MCF 10A (cell line): ENCODE measurements at regions of chr3 and their contacts with region 1.

Region 1: DNA sequence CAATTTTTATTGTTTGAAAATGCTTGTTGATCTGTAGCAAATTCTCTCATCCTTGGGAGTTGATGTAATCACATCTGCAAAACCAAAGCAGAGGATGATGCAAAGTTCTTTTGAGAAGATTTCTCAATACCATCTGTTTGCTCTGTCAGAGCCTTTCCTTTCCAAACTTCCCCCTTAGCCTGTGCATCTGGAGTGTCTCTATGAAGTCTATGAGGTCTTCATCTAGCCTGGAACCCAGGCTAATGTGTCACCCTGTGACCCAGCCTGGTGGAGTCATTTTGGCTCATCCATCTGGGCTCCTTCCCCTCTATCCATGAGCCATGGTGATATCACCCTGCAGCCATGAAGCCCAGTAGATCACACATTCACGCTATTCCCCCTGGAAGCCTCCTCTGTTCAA is 123.2 kb upstream of the SLC7A14 start:
- DNase-seq: peak; percentile 60
- H3K4me3 Mint-ChIP-seq: no peak overlapping the region
- H3K27ac Mint-ChIP-seq: peak overlapping the region; percentile 33
- H3K4me1 Mint-ChIP-seq: peaks cover 19% of the 10 kb centered on the region
- H3K27me3 Mint-ChIP-seq: no peaks in the 10 kb centered on the region
- CTCF ChIP-seq: no peak

Region 2: GRCh38 chr3:170523248-170523647 is 185.8 kb before region 1 on chr3:
- CTCF ChIA-PET with region 1: no interaction called
- POLR2A ChIA-PET with region 1: no interaction called
- intact Hi-C with region 1: no loop called
- DNase-seq: peak; percentile 16
- H3K4me3 Mint-ChIP-seq: no peak overlapping the region
- H3K27ac Mint-ChIP-seq: peak overlapping the region; percentile 3
- H3K4me1 Mint-ChIP-seq: peaks cover 8% of the 10 kb centered on the region
- H3K27me3 Mint-ChIP-seq: no peaks in the 10 kb centered on the region
- CTCF ChIP-seq: no peak

Region 3: DNA sequence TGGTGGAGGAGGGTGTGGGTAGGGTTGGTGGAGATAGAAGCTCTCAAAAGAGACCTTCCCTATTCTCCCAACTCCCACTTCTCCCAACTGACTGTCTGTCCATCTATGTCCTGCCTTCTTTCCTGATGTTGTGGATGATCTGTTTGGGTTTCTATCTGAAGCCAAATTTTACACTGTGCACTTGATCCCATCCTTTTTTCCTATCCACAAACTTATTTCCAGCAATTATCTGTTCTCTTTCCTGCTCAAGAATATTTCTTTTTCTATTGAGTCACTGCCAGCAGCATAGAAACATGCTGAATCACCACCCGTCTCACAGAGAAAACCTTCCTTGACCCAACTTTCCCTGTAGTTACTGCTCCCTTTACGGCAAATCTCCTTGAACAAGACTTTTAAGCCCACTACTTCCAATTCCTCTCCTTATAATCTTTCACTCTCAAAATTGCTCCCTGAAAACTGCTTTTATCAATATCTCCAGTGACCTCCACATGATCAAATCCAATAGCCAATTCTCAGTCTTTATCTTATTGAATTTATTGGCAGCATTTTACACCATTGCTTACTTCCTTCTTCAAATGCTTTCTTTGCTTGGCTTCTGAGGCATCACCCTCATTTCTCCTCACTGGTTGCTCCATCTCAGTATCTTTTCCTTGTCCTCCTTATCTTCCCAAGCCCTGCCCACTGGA is 18.1 kb after region 1 on chr3:
- CTCF ChIA-PET with region 1: interaction called, 3 read pairs
- POLR2A ChIA-PET with region 1: interaction called, 3 read pairs
- intact Hi-C with region 1: loop called (anchors 2 kb)
- DNase-seq: peak; percentile 75
- H3K4me3 Mint-ChIP-seq: no peak overlapping the region
- H3K27ac Mint-ChIP-seq: no peak overlapping the region
- H3K4me1 Mint-ChIP-seq: peaks cover 11% of the 10 kb centered on the region
- H3K27me3 Mint-ChIP-seq: no peaks in the 10 kb centered on the region
- CTCF ChIP-seq: no peak